BJ (cell line): ENCODE measurements at regions of chr10 and their contacts with region 1.

Region 1: DNA sequence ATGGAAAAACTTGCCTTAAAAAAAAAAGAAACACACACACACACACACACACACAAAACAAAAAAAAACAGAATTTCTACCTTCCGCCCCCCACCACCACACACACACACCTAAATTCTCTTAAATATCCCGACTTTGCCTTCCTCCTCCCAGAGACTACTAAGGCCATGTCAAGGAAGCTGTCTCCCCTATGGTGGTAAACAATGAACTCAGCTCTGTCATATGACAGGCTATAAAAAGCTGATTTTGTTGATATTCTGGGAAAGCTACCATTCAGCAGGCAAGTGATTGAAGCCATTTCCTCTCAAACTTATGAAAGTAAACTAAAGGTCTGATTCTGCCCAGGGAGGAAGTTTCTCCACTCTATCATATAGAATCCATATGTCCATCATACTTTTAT is 471.0 kb downstream of the GFRA1 start:
- DNase-seq: no peak
- H3K4me3 ChIP-seq: no peak overlapping the region
- H3K27me3 ChIP-seq: no peaks in the 10 kb centered on the region
- CTCF ChIP-seq: no peak

Region 2: GRCh38 chr10:115814542-115814941 is 12.6 kb after region 1 on chr10:
- CTCF ChIA-PET with region 1: interaction called, 12 read pairs
- POLR2A ChIA-PET with region 1: no interaction called
- DNase-seq: no peak
- H3K4me3 ChIP-seq: no peak overlapping the region
- H3K27me3 ChIP-seq: no peaks in the 10 kb centered on the region
- CTCF ChIP-seq: no peak

Region 3: GRCh38 chr10:116947842-116948529 is 1146.0 kb after region 1 on chr10:
- CTCF ChIA-PET with region 1: no interaction called
- POLR2A ChIA-PET with region 1: no interaction called
- DNase-seq: no peak
- H3K4me3 ChIP-seq: no peak overlapping the region
- H3K27me3 ChIP-seq: no peaks in the 10 kb centered on the region
- CTCF ChIP-seq: no peak